ENCODE measurements at regions of chr1 and their contacts with region 1.

Region 1: DNA sequence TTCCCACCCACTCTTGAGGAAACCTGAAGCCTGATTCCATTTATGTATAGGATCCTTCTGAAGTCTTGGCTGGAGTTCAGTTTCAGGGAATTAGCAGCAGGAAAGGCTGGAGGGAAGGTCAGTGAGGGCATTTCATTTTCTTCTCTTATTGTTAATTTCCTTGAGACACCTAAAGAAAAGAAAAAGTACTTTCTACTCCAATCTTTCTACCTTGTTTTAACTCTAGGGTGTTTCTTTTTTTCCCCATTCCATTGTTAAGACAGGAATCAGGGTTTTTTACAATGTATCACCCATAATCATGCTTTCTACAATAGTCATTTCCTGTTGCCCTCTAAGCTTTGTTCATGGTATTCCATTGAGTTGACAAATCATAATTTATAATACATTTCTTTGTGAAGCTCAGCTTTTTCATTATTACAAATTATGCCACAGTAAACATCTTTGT is 27.4 kb downstream of the SNRPE start:
- DNase-seq: peak; percentile 92
- H3K4me3 ChIP-seq: no peak overlapping the region
- H3K27ac ChIP-seq: peak overlapping the region; percentile 92
- H3K4me1 ChIP-seq: peaks cover 18% of the 10 kb centered on the region
- H3K27me3 ChIP-seq: no peaks in the 10 kb centered on the region
- CTCF ChIP-seq: no peak
- POLR2A ChIP-seq: no peak

Region 2: DNA sequence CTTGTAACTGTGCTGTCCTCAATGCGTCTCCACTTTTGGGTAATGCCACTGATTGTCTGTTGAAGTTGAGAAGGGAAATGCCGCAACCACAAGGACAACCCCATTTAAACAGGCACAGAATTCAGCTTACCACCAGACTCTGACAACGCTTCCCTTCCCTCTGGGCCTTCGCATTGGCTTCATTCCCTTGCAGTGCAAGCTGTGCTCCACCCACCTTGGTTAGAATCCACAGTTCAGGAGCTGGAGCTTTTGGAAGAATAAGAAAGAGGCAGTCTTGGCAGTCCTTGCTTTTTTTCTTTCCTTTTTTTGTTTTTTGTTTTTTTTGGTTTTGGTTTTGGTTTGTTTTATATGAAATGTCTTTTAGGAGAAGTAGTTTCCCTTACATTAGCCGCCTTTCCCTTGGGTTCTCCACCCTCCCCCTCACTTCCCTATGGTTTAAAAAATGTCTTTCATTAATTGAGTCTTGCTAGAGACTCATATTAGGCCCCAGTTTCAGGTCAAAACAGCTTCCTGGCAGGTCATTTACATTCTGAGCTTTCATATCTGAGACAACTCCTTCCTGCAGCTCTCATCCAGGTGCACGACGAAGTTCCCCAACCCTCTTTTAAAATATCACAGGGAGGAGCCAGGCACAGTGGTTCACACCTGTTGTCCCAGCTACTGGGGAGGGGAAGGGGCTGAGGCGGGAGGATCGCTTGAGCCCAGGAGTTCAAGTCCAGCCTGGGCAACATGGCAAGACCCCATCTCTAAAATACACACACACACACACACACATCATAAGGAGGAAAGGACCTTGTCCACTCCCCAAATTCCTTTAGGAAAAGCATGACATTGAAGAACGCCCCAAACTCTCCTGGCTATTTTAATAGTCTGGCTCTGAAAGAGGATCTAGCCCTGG is 144.5 kb before region 1 on chr1:
- CTCF ChIA-PET with region 1: no interaction called
- POLR2A ChIA-PET with region 1: no interaction called
- dilution Hi-C with region 1: no loop called
- intact Hi-C with region 1: no loop called
- DNase-seq: no peak
- H3K4me3 ChIP-seq: no peak overlapping the region
- H3K27ac ChIP-seq: no peak overlapping the region
- H3K4me1 ChIP-seq: peaks cover 6% of the 10 kb centered on the region
- H3K27me3 ChIP-seq: no peaks in the 10 kb centered on the region
- CTCF ChIP-seq: no peak
- POLR2A ChIP-seq: no peak

Region 3: GRCh38 chr1:203906932-203907331 is 18.1 kb after region 1 on chr1:
- CTCF ChIA-PET with region 1: no interaction called
- POLR2A ChIA-PET with region 1: no interaction called
- dilution Hi-C with region 1: no loop called
- intact Hi-C with region 1: no loop called
- DNase-seq: peak; percentile 62
- H3K4me3 ChIP-seq: no peak overlapping the region
- H3K27ac ChIP-seq: peak overlapping the region; percentile 33
- H3K4me1 ChIP-seq: peaks cover 9% of the 10 kb centered on the region
- H3K27me3 ChIP-seq: no peaks in the 10 kb centered on the region
- CTCF ChIP-seq: no peak
- POLR2A ChIP-seq: no peak

Region 4: GRCh38 chr1:204104133-204104871 is 215.5 kb after region 1 on chr1:
- CTCF ChIA-PET with region 1: interaction called, 3 read pairs
- POLR2A ChIA-PET with region 1: no interaction called
- dilution Hi-C with region 1: no loop called
- intact Hi-C with region 1: loop called (anchors 1 kb)
- DNase-seq: peak; percentile 53
- H3K4me3 ChIP-seq: no peak overlapping the region
- H3K27ac ChIP-seq: peak overlapping the region; percentile 73
- H3K4me1 ChIP-seq: peaks cover 55% of the 10 kb centered on the region
- H3K27me3 ChIP-seq: no peaks in the 10 kb centered on the region
- CTCF ChIP-seq: no peak
- POLR2A ChIP-seq: peak; percentile 20